WTC11 (cell line): ENCODE measurements at regions of chr3 and their contacts with region 1.

Region 1: GRCh38 chr3:158659454-158660237 is 12.8 kb downstream of the LXN start:
- DNase-seq: peak; percentile 49
- ATAC-seq: peak; percentile 68
- H3K4me3 Mint-ChIP-seq: no peak overlapping the region
- H3K27ac Mint-ChIP-seq: no peak overlapping the region
- H3K4me1 Mint-ChIP-seq: no peaks in the 10 kb centered on the region
- H3K27me3 Mint-ChIP-seq: no peaks in the 10 kb centered on the region
- CTCF ChIP-seq: 0 out of 2 replicates have a peak, but pooled peaks have one; percentile 19

Region 2: DNA sequence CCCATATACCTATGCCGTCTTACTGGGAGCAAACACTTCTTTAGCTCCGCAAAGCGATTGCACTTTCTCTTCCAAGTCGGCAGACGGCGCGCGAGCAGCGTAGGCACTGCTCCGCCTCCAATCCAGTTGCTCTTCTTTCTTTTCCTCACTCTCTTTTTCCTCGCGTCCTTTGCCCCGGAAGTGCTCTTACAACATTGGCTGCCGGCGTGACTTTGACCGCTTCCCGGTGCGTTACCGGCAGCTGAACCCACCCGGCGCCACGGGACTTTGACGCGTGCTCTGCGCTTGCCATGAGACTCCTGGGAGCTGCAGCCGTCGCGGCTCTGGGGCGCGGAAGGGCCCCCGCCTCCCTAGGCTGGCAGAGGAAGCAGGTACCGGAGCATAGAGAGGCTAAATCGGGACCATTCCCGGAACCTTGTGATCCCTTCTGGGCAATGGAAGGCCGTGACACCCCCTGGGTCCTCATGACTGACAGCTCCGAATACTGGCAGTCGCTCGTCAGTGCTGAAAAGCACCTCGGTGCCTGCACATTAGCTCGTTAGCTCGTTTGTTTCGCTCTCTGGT is 15.2 kb before region 1 on chr3 and contains the start of gene GFM1:
- CTCF ChIA-PET with region 1: interaction called, 21 read pairs
- POLR2A ChIA-PET with region 1: no interaction called
- DNase-seq: peak; percentile 86
- ATAC-seq: peak; percentile 99
- H3K4me3 Mint-ChIP-seq: peak within 1 kb of the TSS; percentile 98
- H3K27ac Mint-ChIP-seq: peak within 1 kb of the TSS; percentile 92
- H3K4me1 Mint-ChIP-seq: peaks cover 6% of the 10 kb centered on the region
- H3K27me3 Mint-ChIP-seq: peaks cover 5% of the 10 kb centered on the region; the same call in 1 of the 2 replicates
- CTCF ChIP-seq: peak; percentile 47; the same call in 1 of the 2 replicates
- total RNA-seq, gene GFM1: 38.9 to 44.5 TPM (median 43.2 TPM) in 3 replicates

Region 3: GRCh38 chr3:158672293-158673176 is 12.9 kb after region 1 on chr3 and contains the start of gene LXN:
- CTCF ChIA-PET with region 1: interaction called, 25 read pairs
- POLR2A ChIA-PET with region 1: no interaction called
- DNase-seq: peak; percentile 95
- ATAC-seq: peak; percentile 99
- H3K4me3 Mint-ChIP-seq: peak within 1 kb of the TSS; percentile 87
- H3K27ac Mint-ChIP-seq: peak within 1 kb of the TSS; percentile 94
- H3K4me1 Mint-ChIP-seq: peaks cover 17% of the 10 kb centered on the region
- H3K27me3 Mint-ChIP-seq: no peaks in the 10 kb centered on the region
- CTCF ChIP-seq: peak; percentile 16; the same call in 1 of the 2 replicates
- total RNA-seq, gene LXN: 3.8 to 4.6 TPM (median 4.4 TPM) in 3 replicates

Region 4: GRCh38 chr3:158737976-158738615 is 78.5 kb after region 1 on chr3:
- CTCF ChIA-PET with region 1: no interaction called
- POLR2A ChIA-PET with region 1: no interaction called
- DNase-seq: no peak
- ATAC-seq: no peak
- H3K4me3 Mint-ChIP-seq: no peak overlapping the region
- H3K27ac Mint-ChIP-seq: no peak overlapping the region
- H3K4me1 Mint-ChIP-seq: no peaks in the 10 kb centered on the region
- H3K27me3 Mint-ChIP-seq: peaks cover 6% of the 10 kb centered on the region
- CTCF ChIP-seq: no peak

Region 5: DNA sequence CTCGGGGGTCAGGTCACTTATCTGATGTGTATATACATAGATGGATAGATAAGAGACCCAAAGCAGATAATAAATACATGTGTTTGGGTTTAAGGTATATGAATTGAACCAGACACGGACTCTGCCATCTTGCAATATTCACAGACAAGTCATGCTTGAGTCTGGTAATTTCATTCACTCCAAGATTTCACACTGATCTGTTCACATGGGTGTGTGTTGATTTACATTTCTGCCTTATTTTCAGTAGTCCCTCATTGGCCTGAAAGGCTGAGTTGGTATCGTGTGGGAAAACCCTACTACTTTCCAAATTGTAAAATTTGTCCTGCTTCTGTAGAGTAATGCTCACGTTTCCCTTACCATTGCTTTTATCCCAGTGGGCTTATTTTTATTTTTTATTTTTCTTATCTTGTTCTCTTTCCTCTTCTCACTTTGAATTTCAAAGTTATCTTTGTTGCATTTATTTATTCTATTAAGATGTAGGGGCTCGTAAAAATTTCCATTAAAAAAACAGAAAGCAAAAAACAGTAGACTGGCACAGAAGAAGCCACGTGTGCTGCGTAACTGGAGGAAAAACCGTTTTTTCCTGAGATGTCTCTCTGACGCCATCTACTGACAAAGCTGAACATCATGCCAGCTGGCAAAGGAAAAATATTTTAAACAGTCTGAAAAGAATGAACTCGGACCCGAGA is 131.4 kb after region 1 on chr3:
- CTCF ChIA-PET with region 1: interaction called, 14 read pairs
- POLR2A ChIA-PET with region 1: no interaction called
- DNase-seq: no peak
- ATAC-seq: peak; percentile 65
- H3K4me3 Mint-ChIP-seq: no peak overlapping the region
- H3K27ac Mint-ChIP-seq: no peak overlapping the region
- H3K4me1 Mint-ChIP-seq: no peaks in the 10 kb centered on the region; the same call in 1 of the 2 replicates
- H3K27me3 Mint-ChIP-seq: peaks cover 2% of the 10 kb centered on the region
- CTCF ChIP-seq: peak; percentile 11